Vagina (tissue), 2 donors: ENCODE measurements at regions of chr11 and their contacts with region 1.

Region 1: GRCh38 chr11:65817835-65818742 is 15.7 kb upstream of the SNX32 start:
- DNase-seq: no peak
- H3K4me3 ChIP-seq: peak overlapping the region; percentile 54 to 79
- H3K27ac ChIP-seq: peak overlapping the region; percentile 83
- H3K4me1 ChIP-seq: peaks cover 29% of the 10 kb centered on the region
- H3K27me3 ChIP-seq: no peaks in the 10 kb centered on the region
- CTCF ChIP-seq: peak; percentile 81 to 100 (median 96)
- POLR2A ChIP-seq: no peak

Region 2: DNA sequence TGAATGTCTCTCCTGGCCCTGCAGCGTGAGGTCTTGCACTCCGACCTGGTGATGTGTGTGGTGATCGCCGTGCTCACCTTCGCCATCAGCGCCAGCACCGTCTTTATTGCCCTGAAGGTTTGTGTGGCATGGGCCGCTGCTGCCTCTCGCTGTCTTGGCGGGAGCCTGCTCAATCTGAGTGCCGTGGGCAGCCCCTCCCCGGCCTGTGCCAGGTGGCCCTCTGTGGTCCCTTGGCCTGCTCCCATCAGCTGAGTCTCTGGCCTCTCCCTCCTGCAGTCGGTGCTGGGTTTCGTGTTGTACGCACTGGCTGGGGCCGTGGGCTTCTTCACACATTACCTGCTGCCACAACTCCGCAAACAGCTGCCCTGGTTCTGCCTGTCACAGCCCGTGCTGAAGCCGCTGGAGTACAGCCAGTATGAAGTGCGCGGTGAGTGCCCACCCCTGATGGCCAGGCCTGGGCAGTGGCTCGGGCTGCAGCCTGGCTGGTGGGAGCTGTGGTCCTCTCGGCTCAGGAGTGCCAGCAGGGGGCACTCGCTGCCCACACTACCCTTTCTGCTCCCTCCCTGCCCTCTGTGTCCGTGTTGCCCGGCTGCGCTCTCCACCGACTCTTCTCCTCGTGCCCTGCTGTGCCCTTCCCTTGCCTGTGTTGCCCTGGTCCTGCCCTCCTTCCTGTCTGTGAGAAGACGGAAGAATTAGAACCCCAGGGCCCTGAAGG is 192.3 kb before region 1 on chr11:
- intact Hi-C with region 1: loop called (anchors 10 kb)
- DNase-seq: no peak
- H3K4me3 ChIP-seq: no peak overlapping the region
- H3K27ac ChIP-seq: no peak overlapping the region
- H3K4me1 ChIP-seq: no peaks in the 10 kb centered on the region
- H3K27me3 ChIP-seq: no peaks in the 10 kb centered on the region
- CTCF ChIP-seq: peak in 2 of 3 experiments; percentile 30 to 35
- POLR2A ChIP-seq: no peak

Region 3: GRCh38 chr11:65711785-65712632 is 106.1 kb before region 1 on chr11 and contains the start of gene KAT5:
- intact Hi-C with region 1: loop called (anchors 2 kb)
- DNase-seq: peak in 1 of 2 donors; percentile 99
- H3K4me3 ChIP-seq: peak within 1 kb of the TSS; percentile 55 to 60
- H3K27ac ChIP-seq: peak within 1 kb of the TSS; percentile 99
- H3K4me1 ChIP-seq: peaks cover 20% of the 10 kb centered on the region
- H3K27me3 ChIP-seq: no peaks in the 10 kb centered on the region
- CTCF ChIP-seq: peak; percentile 91 to 100 (median 97)
- POLR2A ChIP-seq: peak in 1 of 2 donors; percentile 76
- total RNA-seq, gene KAT5: 58.9 TPM

Region 4: GRCh38 chr11:65779851-65780577 is 38.1 kb before region 1 on chr11:
- intact Hi-C with region 1: loop called (anchors 5 kb)
- DNase-seq: peak; percentile 87 to 95
- H3K4me3 ChIP-seq: peak overlapping the region; percentile 79 to 99
- H3K27ac ChIP-seq: peak overlapping the region; percentile 76
- H3K4me1 ChIP-seq: peaks cover 34% of the 10 kb centered on the region
- H3K27me3 ChIP-seq: no peaks in the 10 kb centered on the region
- CTCF ChIP-seq: peak; percentile 31 to 75 (median 36)
- POLR2A ChIP-seq: no peak